Activated CD4-positive, alpha-beta T cell treated with anti-CD3 and anti-CD28 coated beads for 36 hours (primary cell): ENCODE measurements at regions of chr20 and their contacts with region 1.

Region 1: DNA sequence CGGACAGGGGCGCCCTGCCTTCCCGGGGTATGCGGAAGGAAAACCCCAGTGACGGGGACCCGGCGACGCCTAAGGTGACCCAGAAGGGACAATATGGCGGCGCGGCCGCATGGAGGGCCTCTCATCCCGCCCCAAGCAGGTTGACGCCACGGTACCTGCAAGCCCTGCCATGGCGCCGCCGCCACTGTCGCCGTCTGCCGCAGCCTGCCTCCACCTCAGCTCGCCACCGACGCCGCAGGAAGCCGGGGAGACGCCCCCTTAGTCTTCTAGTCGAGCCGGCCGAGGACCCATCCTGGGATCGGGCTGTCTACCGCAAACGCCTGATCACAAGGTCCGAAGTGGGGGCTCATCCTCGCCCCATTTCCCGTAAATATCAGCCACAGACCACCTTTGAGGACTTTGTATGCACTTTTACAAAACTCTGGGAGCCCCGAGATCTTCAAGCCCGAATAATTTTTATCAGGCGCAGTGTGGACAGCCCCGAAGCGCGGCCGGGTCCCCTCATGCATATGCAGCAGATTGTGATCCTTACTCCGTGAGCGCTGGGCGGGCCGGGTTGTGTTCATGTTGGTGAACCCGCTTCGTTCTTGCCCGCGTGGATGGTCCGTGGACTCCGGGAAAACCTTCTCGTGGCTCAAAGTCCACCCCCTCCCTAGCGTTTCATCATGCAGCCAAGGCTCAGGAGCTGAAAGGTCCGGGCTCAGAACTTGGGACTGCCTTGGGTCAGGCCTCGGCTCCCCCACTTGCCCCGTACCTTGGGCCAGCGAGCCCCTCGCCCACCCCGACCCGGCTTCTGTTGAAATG is at the start of gene BLCAP:
- DNase-seq: peak; percentile 94
- ATAC-seq: peak; percentile 89
- H3K4me3 Mint-ChIP-seq: peak within 1 kb of the TSS; percentile 76
- H3K27ac Mint-ChIP-seq: peak within 1 kb of the TSS; percentile 98
- H3K4me1 Mint-ChIP-seq: peaks cover 43% of the 10 kb centered on the region
- H3K27me3 Mint-ChIP-seq: no peaks in the 10 kb centered on the region
- total RNA-seq, gene BLCAP: 17.7 to 18.6 TPM

Region 2: GRCh38 chr20:37178839-37179670 is 348.8 kb before region 1 on chr20 and contains the starts of genes MROH8 and RPN2:
- CTCF ChIA-PET with region 1: interaction called, 4 read pairs
- POLR2A ChIA-PET with region 1: no interaction called
- intact Hi-C with region 1: loop called in 1 of 2 experiments (anchors 1 kb)
- DNase-seq: peak; percentile 98
- ATAC-seq: peak; percentile 97
- H3K4me3 Mint-ChIP-seq: peak within 1 kb of the TSS; percentile 87
- H3K27ac Mint-ChIP-seq: peak within 1 kb of the TSS; percentile 92
- H3K4me1 Mint-ChIP-seq: peaks cover 33% of the 10 kb centered on the region
- H3K27me3 Mint-ChIP-seq: no peaks in the 10 kb centered on the region
- total RNA-seq, gene MROH8: 3.0 to 4.5 TPM
- total RNA-seq, gene RPN2: 103 to 115 TPM

Region 3: DNA sequence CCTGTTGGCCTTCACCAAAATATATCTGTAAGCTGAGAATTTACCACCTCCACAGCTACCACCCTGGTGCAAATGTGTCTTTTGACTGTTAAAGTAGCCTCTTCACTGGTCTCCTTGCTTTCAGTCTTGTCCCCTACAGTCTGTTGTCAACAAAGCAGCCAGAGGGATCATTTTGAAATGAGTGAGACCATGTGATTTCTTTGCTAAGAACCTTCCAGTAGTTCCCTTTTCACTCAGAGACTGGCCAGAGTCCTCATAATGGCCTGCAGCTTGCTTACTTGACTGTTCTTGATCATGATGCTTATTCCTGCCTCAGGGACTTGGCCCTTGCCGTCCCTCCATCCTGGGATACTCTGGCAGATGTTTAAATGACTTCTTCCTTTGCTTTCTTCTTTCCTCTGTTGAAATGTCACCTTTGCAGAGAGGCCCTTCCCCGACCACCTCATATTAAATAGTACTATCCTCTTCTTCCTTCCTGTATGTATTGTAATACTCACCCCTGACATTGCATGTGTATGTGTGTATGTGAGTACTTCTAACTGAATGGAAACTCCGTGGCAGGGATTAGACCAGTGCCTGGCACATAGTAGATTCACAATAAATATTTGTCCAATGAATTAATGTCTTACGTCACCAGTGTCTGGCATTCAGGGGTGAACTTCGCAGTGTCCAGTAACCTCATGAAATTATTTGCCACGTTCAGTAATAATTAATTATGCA is 233.4 kb before region 1 on chr20:
- CTCF ChIA-PET with region 1: no interaction called
- POLR2A ChIA-PET with region 1: no interaction called
- intact Hi-C with region 1: loop called (anchors 1 to 5 kb)
- DNase-seq: no peak
- ATAC-seq: no peak
- H3K4me3 Mint-ChIP-seq: no peak overlapping the region
- H3K27ac Mint-ChIP-seq: no peak overlapping the region
- H3K4me1 Mint-ChIP-seq: peaks cover 54% of the 10 kb centered on the region
- H3K27me3 Mint-ChIP-seq: no peaks in the 10 kb centered on the region

Region 4: GRCh38 chr20:37406010-37406998 is 121.5 kb before region 1 on chr20:
- CTCF ChIA-PET with region 1: no interaction called
- POLR2A ChIA-PET with region 1: no interaction called
- intact Hi-C with region 1: loop called (anchors 5 kb)
- DNase-seq: peak; percentile 61
- ATAC-seq: peak; percentile 78
- H3K4me3 Mint-ChIP-seq: peak overlapping the region; percentile 35
- H3K27ac Mint-ChIP-seq: peak overlapping the region; percentile 10
- H3K4me1 Mint-ChIP-seq: peaks cover 12% of the 10 kb centered on the region
- H3K27me3 Mint-ChIP-seq: peaks cover 26% of the 10 kb centered on the region

Region 5: DNA sequence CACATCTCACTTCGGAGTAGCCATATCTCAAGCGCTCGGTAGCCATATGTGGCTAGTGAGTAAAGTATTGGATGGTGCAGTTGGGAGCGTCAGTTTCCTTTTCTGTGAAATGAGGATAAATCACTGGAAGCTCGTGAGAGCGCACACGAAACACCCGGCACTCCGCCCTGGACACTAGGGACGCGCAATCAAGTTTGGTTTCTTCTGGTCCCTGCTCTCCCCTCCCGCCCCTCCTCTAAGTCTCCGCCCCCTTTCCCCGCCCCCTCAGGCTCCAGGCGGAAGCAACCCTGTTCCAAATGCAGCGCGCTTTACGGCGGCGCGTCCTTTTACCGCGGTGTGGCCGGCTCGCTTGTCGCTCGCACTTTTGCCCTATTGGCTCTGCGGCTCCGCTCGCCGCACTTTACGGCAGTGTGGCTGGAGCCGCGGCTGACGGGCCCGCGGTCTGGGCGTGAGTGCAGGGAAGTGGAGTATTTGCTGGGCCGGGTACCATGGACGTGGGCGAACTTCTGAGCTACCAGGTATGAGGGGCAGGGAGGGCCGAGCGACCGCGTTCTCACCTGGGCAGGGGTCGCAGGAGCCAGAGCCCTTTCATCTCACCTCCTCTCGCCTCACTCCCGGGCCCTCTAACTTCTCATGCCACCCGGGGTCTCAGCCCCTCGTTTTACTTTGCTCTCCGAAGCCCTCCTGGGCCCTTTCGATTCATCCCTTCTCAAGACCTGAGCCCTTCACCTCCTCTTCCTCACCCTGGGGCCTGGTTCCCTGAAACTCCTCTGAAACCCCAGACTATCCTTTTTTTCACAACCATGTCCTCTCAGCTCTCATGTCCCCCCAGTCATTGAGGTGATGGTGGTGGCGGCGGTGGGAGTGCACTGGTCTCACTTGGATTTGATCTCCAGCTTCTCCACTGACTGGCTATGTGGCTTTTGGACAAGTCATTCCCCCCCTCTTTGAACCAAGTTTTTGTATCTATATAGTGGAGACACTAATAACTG is 166.1 kb after region 1 on chr20 and contains the start of gene CTNNBL1:
- CTCF ChIA-PET with region 1: no interaction called
- POLR2A ChIA-PET with region 1: no interaction called
- intact Hi-C with region 1: loop called in 1 of 2 experiments (anchors 5 kb)
- DNase-seq: peak; percentile 99
- ATAC-seq: peak; percentile 98
- H3K4me3 Mint-ChIP-seq: peak within 1 kb of the TSS; percentile 100
- H3K27ac Mint-ChIP-seq: peak within 1 kb of the TSS; percentile 96
- H3K4me1 Mint-ChIP-seq: peaks cover 31% of the 10 kb centered on the region
- H3K27me3 Mint-ChIP-seq: peaks cover 14% of the 10 kb centered on the region
- total RNA-seq, gene CTNNBL1: 72.6 to 93.4 TPM